Activated CD4-positive, alpha-beta T cell treated with anti-CD3 and anti-CD28 coated beads, Interleukin-2, amount 10 ng/mL, durations not matched to agents 24 days and 14 days (primary cell): ENCODE measurements at regions of chr3 and their contacts with region 1.

Region 1: DNA sequence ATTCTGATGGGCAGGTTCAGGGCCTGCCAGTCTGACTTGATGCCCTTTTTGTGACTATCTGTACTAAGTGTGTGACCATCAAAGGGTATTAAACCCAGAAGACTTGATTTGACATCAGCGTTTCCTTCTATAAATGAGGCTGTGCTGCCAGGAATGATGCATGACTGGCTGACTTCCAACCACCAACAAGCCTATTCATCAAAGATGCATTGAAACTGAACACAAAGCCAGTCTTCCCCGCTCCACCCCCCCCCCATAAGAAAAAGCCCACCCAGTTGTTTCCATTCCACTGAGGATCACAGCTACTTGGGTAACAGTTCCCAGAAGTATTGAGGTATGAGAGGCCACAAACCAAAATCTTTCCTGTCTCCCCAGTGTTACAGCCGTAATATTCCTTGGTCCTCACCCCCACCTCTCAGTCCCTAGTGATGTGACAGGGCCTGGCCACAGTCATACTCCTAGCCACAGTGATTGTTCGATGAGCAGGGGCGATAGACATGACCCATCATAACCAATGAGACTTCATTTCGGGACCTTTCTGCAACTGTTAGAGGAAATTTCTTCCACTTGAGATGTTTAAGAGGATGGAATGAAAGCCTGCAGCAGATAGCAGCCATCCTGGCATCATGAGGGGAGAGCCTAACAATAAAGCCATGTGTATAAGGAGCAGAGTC is 22.6 kb downstream of the SH3BP5 start:
- DNase-seq: no peak
- H3K4me3 Mint-ChIP-seq: peak overlapping the region; percentile 72
- H3K27ac Mint-ChIP-seq: peak overlapping the region; percentile 94
- H3K4me1 Mint-ChIP-seq: peaks cover 54% of the 10 kb centered on the region
- H3K27me3 Mint-ChIP-seq: no peaks in the 10 kb centered on the region

Region 2: GRCh38 chr3:15241341-15241740 is 68.5 kb before region 1 on chr3:
- intact Hi-C with region 1: no loop called
- DNase-seq: peak; percentile 81
- H3K4me3 Mint-ChIP-seq: no peak overlapping the region
- H3K27ac Mint-ChIP-seq: no peak overlapping the region
- H3K4me1 Mint-ChIP-seq: peaks cover 7% of the 10 kb centered on the region
- H3K27me3 Mint-ChIP-seq: no peaks in the 10 kb centered on the region

Region 3: DNA sequence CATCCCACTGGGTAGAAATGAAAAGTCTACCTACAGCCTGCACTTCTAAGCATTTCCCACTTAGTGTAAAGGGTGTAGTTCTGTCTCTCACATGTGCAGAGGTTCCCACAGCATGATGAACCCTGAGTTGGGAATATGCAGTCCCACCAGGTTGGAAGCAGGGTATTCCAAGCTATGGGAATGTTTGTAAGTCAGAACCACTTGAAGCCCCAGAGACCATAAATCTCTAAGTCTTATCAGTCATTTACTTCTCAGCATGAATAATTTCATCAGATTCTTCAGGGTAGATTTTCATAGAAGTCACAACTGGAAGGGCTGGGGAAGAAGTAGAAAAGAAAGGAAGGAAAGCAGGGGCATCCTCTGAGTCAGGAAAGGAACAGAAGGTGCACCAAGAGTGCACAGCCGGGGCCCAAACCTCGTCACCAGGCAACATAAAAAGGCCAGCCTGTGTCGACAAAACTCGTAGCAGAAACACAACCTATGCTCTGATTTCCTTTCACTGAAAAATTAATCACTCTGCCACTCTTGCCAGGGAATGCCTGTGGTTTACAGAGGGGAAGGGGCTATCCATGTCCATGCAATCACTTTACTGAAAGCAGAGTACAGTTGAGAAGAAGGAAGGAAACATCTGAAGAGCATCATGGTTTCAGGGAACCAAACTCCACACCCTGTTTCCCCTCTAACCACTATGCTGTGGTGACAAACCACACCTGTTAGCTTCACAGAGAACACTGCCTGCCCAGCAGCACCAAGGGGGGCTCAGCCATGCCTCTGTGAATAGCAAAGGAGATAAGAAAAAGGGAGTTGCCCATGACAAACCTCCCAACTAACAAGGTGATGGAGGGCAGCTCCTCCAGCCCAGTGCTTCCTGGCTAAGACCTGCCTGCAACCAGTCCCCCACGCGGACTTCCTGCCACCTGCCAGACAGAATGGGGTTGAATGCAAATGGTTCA is 17.9 kb before region 1 on chr3:
- intact Hi-C with region 1: loop called (anchors 1 kb)
- DNase-seq: peak; percentile 92
- H3K4me3 Mint-ChIP-seq: peak overlapping the region; percentile 50
- H3K27ac Mint-ChIP-seq: peak overlapping the region; percentile 62
- H3K4me1 Mint-ChIP-seq: peaks cover 58% of the 10 kb centered on the region
- H3K27me3 Mint-ChIP-seq: no peaks in the 10 kb centered on the region

Region 4: GRCh38 chr3:15377961-15378791 is 68.4 kb after region 1 on chr3:
- intact Hi-C with region 1: loop called (anchors 1 kb)
- DNase-seq: peak; percentile 99
- H3K4me3 Mint-ChIP-seq: no peak overlapping the region
- H3K27ac Mint-ChIP-seq: peak overlapping the region; percentile 86
- H3K4me1 Mint-ChIP-seq: peaks cover 14% of the 10 kb centered on the region
- H3K27me3 Mint-ChIP-seq: peaks cover 3% of the 10 kb centered on the region